ENCODE measurements at regions of chr9 and their contacts with region 1.

Region 1: GRCh38 chr9:29039258-29039657 is 1466.0 kb upstream of the C9orf72 start:
- DNase-seq: no peak
- ATAC-seq: no peak
- H3K4me3 ChIP-seq: no peak overlapping the region
- H3K27ac ChIP-seq: no peak overlapping the region
- H3K4me1 ChIP-seq: no peaks in the 10 kb centered on the region
- H3K27me3 ChIP-seq: no peaks in the 10 kb centered on the region
- CTCF ChIP-seq: no peak

Region 2: DNA sequence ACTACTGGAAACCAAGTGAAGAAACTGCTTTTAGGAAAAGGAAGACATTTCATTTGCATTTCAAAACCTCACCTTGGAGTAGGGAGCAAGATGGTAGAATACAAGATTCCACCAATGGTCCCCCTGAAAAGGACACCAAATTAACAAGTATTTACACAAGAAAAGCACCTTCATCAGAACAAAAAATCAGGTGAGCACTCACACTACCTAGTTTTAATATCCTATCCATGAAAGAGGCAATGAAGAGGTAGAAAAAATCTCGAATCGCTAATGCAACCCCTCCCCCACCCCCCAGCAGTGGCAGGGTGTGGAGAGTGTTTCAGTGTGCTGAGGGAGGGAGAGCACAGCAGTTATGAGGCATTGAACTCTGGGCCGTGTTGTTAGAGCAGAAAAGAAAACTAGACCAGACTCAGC is 69.0 kb before region 1 on chr9:
- intact Hi-C with region 1: loop called (anchors 10 kb)
- DNase-seq: no peak
- ATAC-seq: no peak
- H3K4me3 ChIP-seq: no peak overlapping the region
- H3K27ac ChIP-seq: no peak overlapping the region
- H3K4me1 ChIP-seq: no peaks in the 10 kb centered on the region
- H3K27me3 ChIP-seq: no peaks in the 10 kb centered on the region
- CTCF ChIP-seq: no peak

Measured in lower lobe of right lung (tissue), 2 donors.